Activated CD4-positive, alpha-beta memory T cell treated with anti-CD3 and anti-CD28 coated beads for 36 hours (primary cell): ENCODE measurements at regions of chr9 and their contacts with region 1.

Region 1: DNA sequence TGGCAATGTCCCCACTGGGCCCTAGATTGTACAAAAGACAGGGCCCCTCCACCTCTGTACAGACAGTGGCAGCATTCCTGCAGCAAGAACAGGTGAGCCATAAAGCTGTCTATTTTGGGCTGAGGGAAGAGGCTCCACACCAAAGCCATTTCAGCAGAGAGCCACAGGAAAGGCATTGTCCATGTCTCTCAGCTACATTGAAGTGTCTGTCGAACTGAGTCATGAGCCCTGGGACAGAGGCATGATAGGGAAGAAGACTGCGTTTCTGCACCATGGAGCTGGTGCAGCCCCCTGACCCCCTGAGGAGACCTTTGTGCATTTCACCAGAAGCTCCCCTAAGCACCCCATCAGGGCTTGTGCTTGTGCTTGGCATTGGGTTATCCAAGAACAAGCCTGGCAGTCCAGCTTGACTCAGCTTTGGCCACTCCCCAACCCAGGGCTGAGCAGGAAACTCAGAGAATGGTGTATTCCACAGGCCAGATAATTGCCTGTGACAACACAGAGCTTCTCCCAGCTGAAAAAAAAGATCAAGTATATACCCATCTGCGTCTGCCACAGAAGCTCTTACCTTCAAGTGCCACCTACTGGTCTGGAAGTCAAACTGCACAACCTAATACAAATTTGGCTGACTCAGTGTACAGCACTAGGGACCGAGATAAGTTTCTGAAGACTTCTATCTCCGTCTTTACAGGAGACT is 5.9 kb upstream of the FRMD3 start:
- DNase-seq: no peak
- H3K4me3 Mint-ChIP-seq: no peak overlapping the region
- H3K27ac Mint-ChIP-seq: no peak overlapping the region
- H3K4me1 Mint-ChIP-seq: peaks cover under 1% of the 10 kb centered on the region
- H3K27me3 Mint-ChIP-seq: peaks cover 9% of the 10 kb centered on the region

Region 2: DNA sequence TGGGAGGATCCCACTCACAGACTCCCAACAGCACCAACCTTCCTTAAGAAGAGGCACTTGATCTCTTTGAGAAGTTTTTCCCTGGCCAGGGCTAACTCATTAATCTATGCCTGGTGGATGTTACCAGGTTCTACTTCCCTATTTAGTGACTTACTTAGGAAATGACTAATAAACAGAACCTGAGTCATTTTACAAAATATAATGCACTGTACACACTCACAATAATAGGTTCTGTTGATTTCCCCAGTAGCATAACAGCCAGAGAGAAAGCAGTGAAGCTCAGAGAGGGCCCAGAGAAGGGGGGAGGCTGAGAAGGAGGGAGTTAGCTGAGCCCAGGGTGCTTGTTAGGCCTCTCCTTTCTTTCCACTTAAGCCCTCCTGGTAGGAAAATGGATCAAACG is 33.1 kb before region 1 on chr9:
- CTCF ChIA-PET with region 1: no interaction called
- POLR2A ChIA-PET with region 1: no interaction called
- intact Hi-C with region 1: no loop called
- DNase-seq: no peak
- H3K4me3 Mint-ChIP-seq: no peak overlapping the region
- H3K27ac Mint-ChIP-seq: no peak overlapping the region
- H3K4me1 Mint-ChIP-seq: peaks cover 8% of the 10 kb centered on the region
- H3K27me3 Mint-ChIP-seq: peaks cover 5% of the 10 kb centered on the region

Region 3: GRCh38 chr9:83554278-83554677 is 10.1 kb after region 1 on chr9:
- CTCF ChIA-PET with region 1: interaction called, 11 read pairs
- POLR2A ChIA-PET with region 1: no interaction called
- intact Hi-C with region 1: no loop called
- DNase-seq: no peak
- H3K4me3 Mint-ChIP-seq: no peak overlapping the region
- H3K27ac Mint-ChIP-seq: no peak overlapping the region
- H3K4me1 Mint-ChIP-seq: no peaks in the 10 kb centered on the region
- H3K27me3 Mint-ChIP-seq: no peaks in the 10 kb centered on the region